Heart right ventricle (tissue), 16 donors: ENCODE measurements at regions of chr6 and their contacts with region 1.

Region 1: DNA sequence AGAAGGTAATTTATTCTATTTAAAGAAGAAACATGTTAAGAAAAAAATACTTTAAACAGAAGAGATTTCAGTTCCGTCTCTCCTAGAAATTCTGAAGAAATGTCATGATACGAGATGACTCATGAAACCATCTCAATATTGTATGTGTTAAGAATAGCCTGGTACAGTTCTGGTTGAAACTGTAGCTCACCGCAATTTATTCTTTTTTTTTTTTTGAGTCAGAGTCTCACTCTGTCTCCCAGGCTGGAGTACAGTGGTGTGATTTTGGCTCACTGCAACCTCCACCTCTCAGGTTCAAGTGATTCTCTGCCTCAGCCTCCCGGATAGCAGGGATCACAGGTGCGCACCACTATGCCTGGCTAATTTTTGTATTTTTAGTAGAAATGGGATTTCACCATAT is 103.3 kb downstream of the ARHGAP18 start:
- DNase-seq: no peak
- ATAC-seq: no peak
- H3K4me3 ChIP-seq: no peak overlapping the region
- H3K27ac ChIP-seq: no peak overlapping the region
- H3K4me1 ChIP-seq: peaks cover 0 to 7% (median 0%) of the 10 kb centered on the region in 9 donors
- H3K27me3 ChIP-seq: no peaks in the 10 kb centered on the region
- CTCF ChIP-seq: no peak

Region 2: DNA sequence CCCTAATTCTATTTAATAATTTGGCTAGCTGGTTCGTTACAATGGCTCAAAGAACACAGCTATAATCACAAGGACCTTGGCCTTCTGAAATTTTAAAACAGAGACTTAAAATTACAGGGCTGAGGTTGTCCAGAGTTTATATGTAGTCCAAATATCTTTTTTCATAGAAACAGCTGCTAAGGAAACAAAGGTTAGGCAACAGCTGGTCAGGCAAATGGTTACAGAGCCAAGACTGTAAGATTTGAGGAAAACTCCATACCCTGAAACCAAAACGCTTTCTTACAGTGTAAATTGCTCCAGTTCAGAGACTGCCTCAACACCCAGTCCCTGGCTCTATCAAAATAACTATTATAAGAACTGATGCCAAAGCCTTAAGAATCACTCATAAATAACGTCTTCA is 113.0 kb after region 1 on chr6:
- intact Hi-C with region 1: loop called in 1 of 10 experiments (anchors 10 kb)
- DNase-seq: no peak
- ATAC-seq: peak in 7 of 8 donors; percentile 27 to 79 (median 56)
- H3K4me3 ChIP-seq: no peak overlapping the region
- H3K27ac ChIP-seq: peak overlapping the region in 2 of 10 donors; percentile 4 to 15
- H3K4me1 ChIP-seq: peaks cover 0 to 26% (median under 1%) of the 10 kb centered on the region in 9 donors
- H3K27me3 ChIP-seq: no peaks in the 10 kb centered on the region
- CTCF ChIP-seq: no peak

Region 3: GRCh38 chr6:129730477-129731165 is 124.0 kb after region 1 on chr6:
- intact Hi-C with region 1: loop called in 2 of 10 experiments (anchors 5 to 10 kb)
- DNase-seq: no peak
- ATAC-seq: peak in 4 of 8 donors; percentile 42 to 59 (median 54)
- H3K4me3 ChIP-seq: no peak overlapping the region
- H3K27ac ChIP-seq: no peak overlapping the region
- H3K4me1 ChIP-seq: peaks cover 0 to 15% (median 0%) of the 10 kb centered on the region in 9 donors
- H3K27me3 ChIP-seq: no peaks in the 10 kb centered on the region
- CTCF ChIP-seq: peak; percentile 16 to 69 (median 61)

Region 4: DNA sequence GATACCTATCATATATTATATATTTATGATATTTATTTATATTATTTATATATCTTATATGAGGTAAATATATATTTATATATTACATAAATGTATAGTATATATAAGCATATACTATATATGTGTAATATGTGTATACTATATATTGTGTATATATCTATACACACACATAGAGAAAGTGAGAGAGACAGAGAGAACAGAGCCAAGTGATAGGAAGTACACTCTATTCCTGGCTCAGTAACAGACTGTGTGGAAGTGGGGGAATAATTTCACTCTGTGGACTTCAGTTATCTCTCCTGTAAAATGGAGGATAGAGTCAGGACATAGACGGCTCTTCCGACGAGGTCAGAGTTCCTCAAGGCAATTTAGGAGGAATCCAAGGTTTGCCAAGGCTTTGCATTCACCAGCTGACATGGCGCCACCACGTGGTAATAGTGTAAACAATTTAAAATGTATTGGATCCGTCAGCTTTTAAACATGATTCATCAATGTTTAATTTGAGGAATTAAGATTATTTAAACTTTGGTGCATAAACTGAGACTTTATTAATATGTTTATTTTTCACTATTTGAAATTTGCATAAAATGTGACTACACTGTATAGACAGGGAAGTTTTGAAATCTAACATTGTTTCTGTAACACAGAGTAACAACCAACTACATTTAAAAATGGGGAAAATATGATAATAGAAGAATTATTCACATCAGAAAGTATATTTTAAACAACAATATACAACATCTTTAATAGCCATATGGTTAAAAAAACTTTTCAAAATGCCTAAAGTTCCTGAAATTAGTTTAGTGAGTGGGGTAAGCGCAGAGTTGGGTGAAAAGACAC is 329.9 kb after region 1 on chr6:
- intact Hi-C with region 1: loop called in 2 of 10 experiments (anchors 5 to 10 kb)
- DNase-seq: peak in 1 of 2 donors; percentile 20
- ATAC-seq: peak in 1 of 8 donors; percentile 39
- H3K4me3 ChIP-seq: no peak overlapping the region
- H3K27ac ChIP-seq: no peak overlapping the region
- H3K4me1 ChIP-seq: no peaks in the 10 kb centered on the region
- H3K27me3 ChIP-seq: peaks cover 0 to 22% (median 9%) of the 10 kb centered on the region in 7 donors
- CTCF ChIP-seq: peak; percentile 6 to 69 (median 60)